GM12878 (cell line): ENCODE measurements at regions of chr18 and their contacts with region 1.

Region 1: GRCh38 chr18:9614401-9615279 is at the start of gene PPP4R1:
- DNase-seq: no peak
- ATAC-seq: peak; percentile 65
- H3K4me3 ChIP-seq: peak within 1 kb of the TSS; percentile 97
- H3K27ac ChIP-seq: peak within 1 kb of the TSS; percentile 72
- H3K4me1 ChIP-seq: peaks cover 12% of the 10 kb centered on the region; the same call in 1 of the 2 replicates
- H3K27me3 ChIP-seq: no peaks in the 10 kb centered on the region
- CTCF ChIP-seq: no peak
- EP300 ChIP-seq: no peak
- POLR2A ChIP-seq: peak; percentile 75
- RAD21 ChIP-seq: no peak
- polyA plus RNA-seq, gene PPP4R1: 10.9 to 14.1 TPM

Region 2: DNA sequence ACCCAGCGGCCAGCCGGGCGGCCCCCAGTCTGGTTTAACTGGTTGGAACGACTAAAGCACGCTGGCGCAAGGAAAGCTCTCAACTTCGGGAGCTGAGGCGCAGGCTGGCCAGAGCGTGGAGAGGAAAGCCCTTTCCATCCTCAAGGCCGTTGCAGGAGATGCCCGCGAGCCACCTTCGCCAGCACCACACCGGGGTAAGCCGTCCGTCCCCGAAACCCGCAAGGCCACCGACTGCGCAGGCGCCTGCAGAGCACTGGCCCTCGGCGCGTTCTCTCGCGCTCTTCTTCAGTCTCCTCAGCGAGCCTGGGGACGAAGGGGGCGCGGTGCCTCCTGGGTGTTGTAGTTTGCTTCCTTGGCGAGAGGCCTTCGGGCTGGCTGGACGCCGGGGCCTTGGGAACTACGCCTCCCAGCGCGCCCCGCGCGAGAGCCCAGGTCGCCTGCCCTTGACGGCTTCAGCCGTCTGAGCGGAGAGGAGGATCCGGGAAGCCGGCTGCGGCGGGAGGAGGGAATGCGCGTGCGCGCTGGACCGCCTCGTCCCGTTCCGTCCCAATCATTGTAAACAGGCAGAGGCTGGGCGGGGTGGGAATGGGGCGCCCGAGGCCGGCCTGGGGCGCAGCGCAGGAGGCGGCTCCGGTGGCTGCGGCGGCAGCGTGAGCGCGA is 139.5 kb before region 1 on chr18 and contains the start of gene RALBP1:
- CTCF ChIA-PET with region 1: no interaction called
- POLR2A ChIA-PET with region 1: no interaction called
- RAD21 ChIA-PET with region 1: no interaction called
- SMC1A ChIA-PET with region 1: no interaction called
- in situ Hi-C with region 1: no loop called
- intact Hi-C with region 1: loop called (anchors 5 kb)
- DNase-seq: peak; percentile 94
- ATAC-seq: peak; percentile 96
- H3K4me3 ChIP-seq: peak within 1 kb of the TSS; percentile 97
- H3K27ac ChIP-seq: peak within 1 kb of the TSS; percentile 83
- H3K4me1 ChIP-seq: peaks cover 11% of the 10 kb centered on the region
- H3K27me3 ChIP-seq: no peaks in the 10 kb centered on the region; a peak in 1 of 4 replicates
- CTCF ChIP-seq: peak in 1 of 3 experiments; percentile 39; a peak in 2 of 6 replicates
- EP300 ChIP-seq: no peak
- POLR2A ChIP-seq: peak; percentile 82
- RAD21 ChIP-seq: peak; percentile 47
- polyA plus RNA-seq, gene RALBP1: 11.2 to 17.9 TPM

Region 3: GRCh38 chr18:9634856-9635255 is 20.2 kb after region 1 on chr18:
- CTCF ChIA-PET with region 1: no interaction called
- POLR2A ChIA-PET with region 1: no interaction called
- RAD21 ChIA-PET with region 1: no interaction called
- SMC1A ChIA-PET with region 1: no interaction called
- in situ Hi-C with region 1: no loop called
- intact Hi-C with region 1: no loop called
- DNase-seq: no peak
- ATAC-seq: no peak
- H3K4me3 ChIP-seq: no peak overlapping the region
- H3K27ac ChIP-seq: no peak overlapping the region
- H3K4me1 ChIP-seq: no peaks in the 10 kb centered on the region
- H3K27me3 ChIP-seq: no peaks in the 10 kb centered on the region
- CTCF ChIP-seq: no peak
- EP300 ChIP-seq: no peak
- POLR2A ChIP-seq: no peak
- RAD21 ChIP-seq: no peak

Region 4: GRCh38 chr18:9673296-9674251 is 58.9 kb after region 1 on chr18:
- CTCF ChIA-PET with region 1: interaction called, 5 read pairs
- POLR2A ChIA-PET with region 1: interaction called, 3 read pairs
- RAD21 ChIA-PET with region 1: interaction called, 9 read pairs
- SMC1A ChIA-PET with region 1: interaction called, 4 read pairs
- in situ Hi-C with region 1: no loop called
- intact Hi-C with region 1: loop called (anchors 1 kb)
- DNase-seq: peak; percentile 99
- ATAC-seq: peak; percentile 98
- H3K4me3 ChIP-seq: no peak overlapping the region
- H3K27ac ChIP-seq: peak overlapping the region; percentile 33
- H3K4me1 ChIP-seq: peaks cover 9% of the 10 kb centered on the region
- H3K27me3 ChIP-seq: no peaks in the 10 kb centered on the region
- CTCF ChIP-seq: peak; percentile 34 to 56 (median 55); a peak in 5 of 6 replicates
- EP300 ChIP-seq: peak; percentile 92 to 93
- POLR2A ChIP-seq: no peak
- RAD21 ChIP-seq: peak; percentile 81

Region 5: GRCh38 chr18:9708057-9708433 is 93.4 kb after region 1 on chr18 and contains the start of gene RAB31:
- CTCF ChIA-PET with region 1: interaction called, 4 read pairs
- POLR2A ChIA-PET with region 1: interaction called, 3 read pairs
- RAD21 ChIA-PET with region 1: no interaction called
- SMC1A ChIA-PET with region 1: no interaction called
- in situ Hi-C with region 1: no loop called
- intact Hi-C with region 1: loop called (anchors 10 kb)
- DNase-seq: no peak
- ATAC-seq: peak; percentile 31
- H3K4me3 ChIP-seq: peak within 1 kb of the TSS; percentile 91
- H3K27ac ChIP-seq: peak within 1 kb of the TSS; percentile 47
- H3K4me1 ChIP-seq: peaks cover 44% of the 10 kb centered on the region
- H3K27me3 ChIP-seq: peaks cover 2 to 10% of the 10 kb centered on the region in 2 experiments
- CTCF ChIP-seq: 0 out of 6 replicates have a peak, but pooled peaks of 1 of the 3 experiments have one; percentile 6
- EP300 ChIP-seq: no peak
- POLR2A ChIP-seq: peak; percentile 60; the same call in 1 of the 2 replicates
- RAD21 ChIP-seq: no peak
- polyA plus RNA-seq, gene RAB31: 6.4 to 8.9 TPM

Region 6: DNA sequence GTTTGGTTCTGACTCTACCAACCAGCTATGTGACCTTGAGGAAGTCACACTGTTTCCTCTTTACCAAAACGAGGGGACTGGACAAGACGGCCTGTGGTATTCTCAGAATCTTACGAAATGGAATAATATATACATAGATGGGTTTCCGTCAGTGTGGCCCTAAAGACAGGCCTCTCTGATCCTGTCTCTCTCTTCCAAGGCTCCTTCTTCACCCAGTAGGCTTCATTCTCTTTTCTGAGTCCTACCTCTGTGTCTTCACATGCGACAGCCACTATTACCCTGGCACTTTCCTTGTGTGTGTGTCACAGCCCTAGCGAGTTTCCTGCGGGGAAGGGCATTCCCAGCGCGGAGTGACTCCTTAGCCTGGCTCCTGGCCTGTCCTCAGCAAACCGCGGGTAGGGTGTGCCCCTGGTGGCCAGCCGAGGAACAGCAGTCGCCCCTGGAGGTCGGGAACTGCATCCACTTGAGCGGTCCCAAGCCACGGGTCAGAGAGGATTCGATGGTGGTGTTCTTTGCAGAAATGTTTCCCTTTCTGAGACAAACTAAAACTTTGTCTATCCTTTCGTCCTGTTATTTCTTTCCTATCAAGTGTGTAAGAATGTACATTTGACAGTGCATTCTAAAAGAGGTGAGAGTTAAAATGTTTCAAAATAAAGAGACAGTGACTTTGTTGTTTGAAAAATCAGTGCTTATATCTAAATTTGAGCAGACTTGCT is 156.8 kb after region 1 on chr18:
- CTCF ChIA-PET with region 1: interaction called, 3 read pairs
- POLR2A ChIA-PET with region 1: no interaction called
- RAD21 ChIA-PET with region 1: no interaction called
- SMC1A ChIA-PET with region 1: no interaction called
- in situ Hi-C with region 1: no loop called
- intact Hi-C with region 1: loop called (anchors 2 kb)
- DNase-seq: no peak
- ATAC-seq: peak; percentile 95
- H3K4me3 ChIP-seq: no peak overlapping the region
- H3K27ac ChIP-seq: no peak overlapping the region
- H3K4me1 ChIP-seq: no peaks in the 10 kb centered on the region
- H3K27me3 ChIP-seq: no peaks in the 10 kb centered on the region
- CTCF ChIP-seq: peak; percentile 82 to 99 (median 98)
- EP300 ChIP-seq: no peak
- POLR2A ChIP-seq: no peak
- RAD21 ChIP-seq: peak; percentile 74

Region 7: GRCh38 chr18:9913526-9914333 is 299.1 kb after region 1 on chr18 and contains the start of gene VAPA:
- CTCF ChIA-PET with region 1: no interaction called
- POLR2A ChIA-PET with region 1: no interaction called
- RAD21 ChIA-PET with region 1: no interaction called
- SMC1A ChIA-PET with region 1: no interaction called
- in situ Hi-C with region 1: loop called (anchors 25 kb)
- intact Hi-C with region 1: no loop called
- DNase-seq: peak; percentile 89
- ATAC-seq: peak; percentile 91
- H3K4me3 ChIP-seq: peak within 1 kb of the TSS; percentile 97
- H3K27ac ChIP-seq: peak within 1 kb of the TSS; percentile 93
- H3K4me1 ChIP-seq: peaks cover 3% of the 10 kb centered on the region; the same call in 1 of the 2 replicates
- H3K27me3 ChIP-seq: no peaks in the 10 kb centered on the region
- CTCF ChIP-seq: no peak
- EP300 ChIP-seq: 0 out of 4 replicates have a peak, but pooled peaks of 1 of the 2 experiments have one; percentile 18
- POLR2A ChIP-seq: peak; percentile 96
- RAD21 ChIP-seq: no peak
- polyA plus RNA-seq, gene VAPA: 70.9 to 73.1 TPM